IMR-90 (cell line): ENCODE measurements at regions of chr3 and their contacts with region 1.

Region 1: DNA sequence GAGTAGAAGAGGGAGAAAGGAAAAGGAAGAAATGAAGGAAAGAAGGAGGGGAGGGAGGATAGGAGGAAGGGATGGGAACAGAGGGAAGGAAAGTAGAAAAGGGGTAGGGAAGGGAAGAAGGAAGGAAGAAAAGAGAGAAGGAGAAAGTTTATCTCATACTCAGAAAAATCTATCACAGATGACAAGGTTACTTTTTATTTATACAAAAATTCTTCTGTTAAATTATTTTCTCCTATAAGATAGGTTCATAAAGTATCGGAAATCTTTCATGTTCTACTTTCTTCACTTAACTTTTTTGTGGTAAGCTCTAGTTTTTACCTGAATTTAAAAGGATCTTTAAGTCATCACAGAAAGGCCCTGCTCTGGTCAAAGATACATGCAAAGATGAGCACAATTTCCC is 38.1 kb downstream of the SI start:
- DNase-seq: no peak
- ATAC-seq: no peak
- H3K4me3 ChIP-seq: no peak overlapping the region
- H3K27ac ChIP-seq: no peak overlapping the region
- H3K4me1 ChIP-seq: no peaks in the 10 kb centered on the region
- H3K27me3 ChIP-seq: no peaks in the 10 kb centered on the region
- CTCF ChIP-seq: no peak
- POLR2A ChIP-seq: no peak
- RAD21 ChIP-seq: no peak

Region 2: GRCh38 chr3:165056510-165056909 is 16.3 kb after region 1 on chr3:
- CTCF ChIA-PET with region 1: no interaction called
- POLR2A ChIA-PET with region 1: interaction called, 11 read pairs
- dilution Hi-C with region 1: no loop called
- in situ Hi-C with region 1: no loop called
- intact Hi-C with region 1: no loop called
- DNase-seq: no peak
- ATAC-seq: no peak
- H3K4me3 ChIP-seq: no peak overlapping the region
- H3K27ac ChIP-seq: no peak overlapping the region
- H3K4me1 ChIP-seq: no peaks in the 10 kb centered on the region
- H3K27me3 ChIP-seq: no peaks in the 10 kb centered on the region
- CTCF ChIP-seq: no peak
- POLR2A ChIP-seq: no peak
- RAD21 ChIP-seq: no peak